Ascending aorta (tissue), 2 donors: ENCODE measurements at regions of chr11 and their contacts with region 1.

Region 1: DNA sequence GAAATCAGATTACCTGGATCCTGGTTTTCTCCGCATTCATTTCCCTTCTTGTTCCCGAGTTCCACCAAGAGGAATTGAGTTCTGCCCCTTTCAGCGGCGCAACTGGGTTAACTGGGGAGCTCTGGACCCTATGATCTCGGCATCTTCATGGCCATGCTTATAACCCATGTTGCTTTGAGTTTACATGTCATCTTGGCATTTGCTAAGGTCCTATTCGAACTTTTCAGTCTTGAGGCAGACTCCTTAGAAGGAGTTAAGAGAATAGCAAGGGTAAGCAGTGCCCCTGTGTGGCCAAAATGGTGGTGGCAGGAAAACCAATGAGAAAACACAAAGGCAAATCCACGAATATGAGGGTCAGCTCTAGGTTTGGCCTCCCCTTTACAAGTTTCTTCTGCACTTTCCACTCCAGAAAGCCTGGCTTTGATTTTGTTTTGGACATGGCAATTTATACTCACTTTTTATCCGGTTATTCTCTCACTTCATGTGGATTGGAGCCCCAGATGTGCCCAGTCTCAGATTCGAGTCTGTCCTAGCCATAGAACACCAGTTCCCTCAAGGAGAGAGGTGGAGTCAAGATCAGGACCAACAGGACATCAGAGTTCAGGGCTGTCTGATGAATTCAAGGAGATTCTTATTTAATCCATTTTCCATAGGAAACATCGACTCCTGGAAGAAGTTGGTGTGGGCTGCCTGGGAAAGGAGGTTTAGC is 55.3 kb upstream of the FBXO3 start:
- DNase-seq: peak in 1 of 2 donors; percentile 72
- H3K4me3 ChIP-seq: peak overlapping the region; percentile 53 to 61
- H3K27ac ChIP-seq: no peak overlapping the region
- H3K4me1 ChIP-seq: peaks cover 6 to 8% of the 10 kb centered on the region in 2 donors
- H3K27me3 ChIP-seq: peaks cover 9% of the 10 kb centered on the region
- CTCF ChIP-seq: peak; percentile 59 to 79 (median 67)

Region 2: GRCh38 chr11:33362051-33362910 is 467.3 kb before region 1 on chr11:
- intact Hi-C with region 1: loop called (anchors 5 kb)
- DNase-seq: no peak
- H3K4me3 ChIP-seq: no peak overlapping the region
- H3K27ac ChIP-seq: no peak overlapping the region
- H3K4me1 ChIP-seq: no peaks in the 10 kb centered on the region
- H3K27me3 ChIP-seq: no peaks in the 10 kb centered on the region
- CTCF ChIP-seq: peak; percentile 46 to 67 (median 62)

Region 3: GRCh38 chr11:33808228-33808828 is 21.3 kb before region 1 on chr11:
- intact Hi-C with region 1: loop called (anchors 1 kb)
- DNase-seq: peak in 1 of 2 donors; percentile 91
- H3K4me3 ChIP-seq: no peak overlapping the region
- H3K27ac ChIP-seq: no peak overlapping the region
- H3K4me1 ChIP-seq: no peaks in the 10 kb centered on the region
- H3K27me3 ChIP-seq: no peaks in the 10 kb centered on the region
- CTCF ChIP-seq: peak; percentile 75 to 89 (median 86)